Psoas muscle (tissue), 8 donors: ENCODE measurements at regions of chr12 and their contacts with region 1.

Region 1: DNA sequence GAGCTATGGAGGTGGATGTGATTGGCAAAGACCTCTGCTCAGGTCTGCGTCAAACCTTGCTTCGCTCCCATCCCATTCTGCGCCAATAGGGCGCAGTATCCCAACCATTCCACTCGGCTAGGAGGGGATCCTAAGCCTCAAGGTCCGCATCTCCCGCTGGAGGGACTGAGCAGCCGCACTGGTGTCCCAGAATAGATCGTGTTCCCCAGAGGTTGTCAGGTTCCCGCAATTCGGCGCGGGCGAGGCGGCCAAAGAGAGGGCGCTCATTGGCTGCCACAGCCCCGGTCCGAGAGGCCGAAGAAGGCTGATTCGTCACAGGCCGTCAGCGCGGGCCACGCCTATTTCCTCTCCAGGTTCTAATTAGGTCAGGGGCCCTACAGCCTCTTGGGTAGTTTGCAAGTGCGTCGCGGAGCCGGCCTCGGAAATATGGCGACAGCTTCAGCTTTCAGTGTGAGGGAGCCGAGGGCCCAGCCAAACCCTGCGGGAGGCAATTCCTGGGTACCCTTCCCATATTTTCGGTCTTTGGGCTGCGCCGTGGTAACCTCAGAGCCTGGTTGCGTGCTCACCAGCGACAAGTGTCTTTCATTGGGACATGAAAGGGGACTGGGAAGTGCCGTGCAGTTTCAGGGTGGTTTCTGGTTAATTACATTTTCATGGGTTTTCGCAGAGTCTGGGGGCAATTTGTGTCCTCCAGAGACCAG is 5.0 kb downstream of the OR10AD1 start:
- DNase-seq: peak; percentile 98 to 99
- ATAC-seq: peak; percentile 95 to 98 (median 96)
- H3K4me3 ChIP-seq: peak overlapping the region; percentile 74
- H3K27ac ChIP-seq: peak overlapping the region; percentile 96
- H3K4me1 ChIP-seq: peaks cover 25% of the 10 kb centered on the region
- H3K27me3 ChIP-seq: no peaks in the 10 kb centered on the region
- CTCF ChIP-seq: no peak

Region 2: GRCh38 chr12:47941851-47942601 is 256.1 kb before region 1 on chr12:
- intact Hi-C with region 1: no loop called
- DNase-seq: peak in 1 of 2 donors; percentile 58
- ATAC-seq: peak in 3 of 4 donors; percentile 44 to 59 (median 53)
- H3K4me3 ChIP-seq: no peak overlapping the region
- H3K27ac ChIP-seq: no peak overlapping the region
- H3K4me1 ChIP-seq: no peaks in the 10 kb centered on the region
- H3K27me3 ChIP-seq: peaks cover 0 to 16% (median 4%) of the 10 kb centered on the region in 3 donors
- CTCF ChIP-seq: no peak

Region 3: GRCh38 chr12:47963340-47964040 is 234.6 kb before region 1 on chr12 and contains the start of gene TMEM106C:
- intact Hi-C with region 1: no loop called
- DNase-seq: peak; percentile 91 to 96
- ATAC-seq: peak; percentile 96 to 99 (median 98)
- H3K4me3 ChIP-seq: peak within 1 kb of the TSS; percentile 94
- H3K27ac ChIP-seq: peak within 1 kb of the TSS; percentile 54
- H3K4me1 ChIP-seq: peaks cover 15% of the 10 kb centered on the region
- H3K27me3 ChIP-seq: no peaks in the 10 kb centered on the region
- CTCF ChIP-seq: peak; percentile 95
- total RNA-seq, gene TMEM106C: 7.7 to 15.8 (median 12.6) TPM

Region 4: GRCh38 chr12:48142818-48143674 is 55.1 kb before region 1 on chr12:
- intact Hi-C with region 1: no loop called
- DNase-seq: no peak
- ATAC-seq: peak in 1 of 4 donors; percentile 7
- H3K4me3 ChIP-seq: no peak overlapping the region
- H3K27ac ChIP-seq: peak overlapping the region; percentile 97
- H3K4me1 ChIP-seq: peaks cover 4% of the 10 kb centered on the region
- H3K27me3 ChIP-seq: no peaks in the 10 kb centered on the region
- CTCF ChIP-seq: no peak

Region 5: DNA sequence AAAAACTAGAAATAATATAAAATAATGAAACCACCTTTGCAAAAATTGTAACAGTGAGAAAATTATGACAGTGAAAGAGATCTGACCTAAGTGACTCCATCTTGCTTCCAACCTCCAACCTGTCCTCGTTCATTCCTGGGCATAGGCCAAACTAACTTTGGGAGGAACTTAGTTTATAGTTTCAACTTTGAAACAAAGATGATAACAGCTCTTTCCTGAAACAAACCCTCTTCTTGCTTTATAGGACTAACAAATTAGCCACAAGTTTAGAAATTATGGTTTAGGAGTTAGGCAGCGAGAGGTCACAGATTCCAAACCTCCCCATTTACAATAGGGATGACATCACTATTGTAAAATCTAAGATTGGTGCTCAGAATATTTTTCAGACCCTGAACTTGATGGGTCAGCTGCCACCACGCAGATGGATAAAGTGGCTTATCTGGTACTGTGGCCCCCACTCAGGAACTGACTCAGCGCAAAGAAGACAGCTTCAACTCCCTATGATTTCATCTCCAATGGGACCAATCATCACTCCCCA is 37.7 kb after region 1 on chr12:
- intact Hi-C with region 1: no loop called
- DNase-seq: no peak
- ATAC-seq: no peak
- H3K4me3 ChIP-seq: no peak overlapping the region
- H3K27ac ChIP-seq: no peak overlapping the region
- H3K4me1 ChIP-seq: no peaks in the 10 kb centered on the region
- H3K27me3 ChIP-seq: peaks cover 0 to 2% (median 0%) of the 10 kb centered on the region in 3 donors
- CTCF ChIP-seq: no peak

Region 6: DNA sequence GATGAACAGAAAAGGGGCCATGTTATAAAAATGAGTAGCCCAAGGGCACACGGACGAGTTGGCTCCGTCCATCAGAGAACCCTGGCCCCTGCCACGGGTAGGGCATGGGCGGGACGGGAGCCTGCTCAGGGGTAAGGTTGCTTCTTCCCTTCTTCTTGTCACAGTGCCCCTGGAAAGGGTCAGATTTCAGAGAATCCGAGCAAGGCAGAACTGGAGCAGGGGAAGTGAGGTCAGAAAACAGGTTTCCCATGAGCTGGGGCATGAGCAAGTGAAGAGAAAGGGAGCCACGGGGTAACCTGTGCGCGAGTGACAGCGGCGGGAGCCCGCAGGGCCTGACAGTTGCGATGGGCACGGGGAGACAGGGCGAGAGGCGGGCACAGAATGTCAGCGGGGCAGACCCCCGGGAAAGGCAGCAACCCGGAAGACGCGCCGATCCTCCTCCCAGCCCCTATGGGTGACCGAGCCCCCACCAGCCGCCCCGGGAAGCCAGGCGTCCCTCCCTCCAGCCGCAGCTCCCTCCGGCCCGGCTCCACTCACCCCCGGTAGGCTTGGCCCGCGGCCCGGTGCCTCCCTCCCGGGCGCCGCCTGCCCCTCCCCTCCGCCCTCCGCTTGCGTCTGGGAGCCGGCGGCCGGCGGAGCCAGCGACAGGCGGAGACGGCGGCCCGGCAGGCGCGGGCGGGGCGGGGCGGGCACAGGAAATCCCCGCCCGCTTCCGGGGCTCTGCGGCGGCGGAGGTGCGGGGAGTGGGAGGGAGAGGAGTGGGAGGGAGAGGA is 152.3 kb after region 1 on chr12 and contains the start of gene ZNF641:
- intact Hi-C with region 1: loop called in 1 of 2 experiments (anchors 2 kb)
- DNase-seq: peak; percentile 87 to 91
- ATAC-seq: peak; percentile 93 to 97 (median 94)
- H3K4me3 ChIP-seq: peak within 1 kb of the TSS; percentile 86
- H3K27ac ChIP-seq: peak within 1 kb of the TSS; percentile 97
- H3K4me1 ChIP-seq: peaks cover 18% of the 10 kb centered on the region
- H3K27me3 ChIP-seq: no peaks in the 10 kb centered on the region
- CTCF ChIP-seq: no peak
- total RNA-seq, gene ZNF641: 17.4 to 41.5 (median 22.5) TPM